Activated T-helper 1 cell treated with anti-CD3 and anti-CD28 coated beads, Interleukin-12 subunit alpha, Interleukin-12 subunit beta, Interleukin-2, Interleukin-4 antibody, amounts not matched to agents 30 ng/mL and 10 ng/mL and 1 ng/mL, durations not matched to agents 14 hours and 24 hours and 36 hours (primary cell): ENCODE measurements at regions of chr5 and their contacts with region 1.

Region 1: GRCh38 chr5:113612060-113612496 is 98.6 kb downstream of the YTHDC2 start:
- DNase-seq: no peak
- H3K4me3 Mint-ChIP-seq: no peak overlapping the region
- H3K27ac Mint-ChIP-seq: no peak overlapping the region
- H3K4me1 Mint-ChIP-seq: peaks cover 5% of the 10 kb centered on the region
- H3K27me3 Mint-ChIP-seq: peaks cover 6% of the 10 kb centered on the region

Region 2: DNA sequence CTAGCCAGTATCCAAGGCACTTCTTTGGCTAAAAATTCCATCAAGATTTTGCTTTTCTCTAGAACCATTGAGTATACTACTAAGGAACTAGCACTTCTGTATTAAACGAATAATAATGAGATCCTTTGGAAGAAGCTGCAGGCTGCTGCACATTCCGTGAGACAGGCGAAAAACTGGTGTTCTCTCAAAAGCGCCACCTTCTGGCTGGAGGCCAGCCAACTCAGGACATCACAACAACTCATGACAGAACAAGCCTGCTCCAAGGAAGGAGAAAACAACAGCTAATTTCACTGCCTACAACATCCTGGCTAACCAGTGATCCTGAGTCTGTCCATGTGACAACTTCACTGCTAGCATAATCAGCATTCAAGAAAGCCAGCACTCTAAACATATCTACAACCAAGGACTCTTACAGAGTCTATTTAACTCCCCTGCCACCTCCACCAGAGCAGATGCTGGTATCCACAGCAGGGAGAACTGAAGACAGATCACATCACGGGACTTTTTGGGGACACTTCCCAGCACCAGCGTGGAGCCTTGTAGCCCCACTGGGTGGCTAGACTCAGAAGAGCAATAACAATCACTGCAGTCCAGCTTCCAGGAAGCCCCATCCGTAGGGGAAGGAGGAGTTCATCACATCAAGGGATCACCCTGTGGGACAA is 51.9 kb after region 1 on chr5:
- intact Hi-C with region 1: loop called (anchors 1 kb)
- DNase-seq: no peak
- H3K4me3 Mint-ChIP-seq: no peak overlapping the region
- H3K27ac Mint-ChIP-seq: no peak overlapping the region
- H3K4me1 Mint-ChIP-seq: no peaks in the 10 kb centered on the region
- H3K27me3 Mint-ChIP-seq: peaks cover 11% of the 10 kb centered on the region

Region 3: DNA sequence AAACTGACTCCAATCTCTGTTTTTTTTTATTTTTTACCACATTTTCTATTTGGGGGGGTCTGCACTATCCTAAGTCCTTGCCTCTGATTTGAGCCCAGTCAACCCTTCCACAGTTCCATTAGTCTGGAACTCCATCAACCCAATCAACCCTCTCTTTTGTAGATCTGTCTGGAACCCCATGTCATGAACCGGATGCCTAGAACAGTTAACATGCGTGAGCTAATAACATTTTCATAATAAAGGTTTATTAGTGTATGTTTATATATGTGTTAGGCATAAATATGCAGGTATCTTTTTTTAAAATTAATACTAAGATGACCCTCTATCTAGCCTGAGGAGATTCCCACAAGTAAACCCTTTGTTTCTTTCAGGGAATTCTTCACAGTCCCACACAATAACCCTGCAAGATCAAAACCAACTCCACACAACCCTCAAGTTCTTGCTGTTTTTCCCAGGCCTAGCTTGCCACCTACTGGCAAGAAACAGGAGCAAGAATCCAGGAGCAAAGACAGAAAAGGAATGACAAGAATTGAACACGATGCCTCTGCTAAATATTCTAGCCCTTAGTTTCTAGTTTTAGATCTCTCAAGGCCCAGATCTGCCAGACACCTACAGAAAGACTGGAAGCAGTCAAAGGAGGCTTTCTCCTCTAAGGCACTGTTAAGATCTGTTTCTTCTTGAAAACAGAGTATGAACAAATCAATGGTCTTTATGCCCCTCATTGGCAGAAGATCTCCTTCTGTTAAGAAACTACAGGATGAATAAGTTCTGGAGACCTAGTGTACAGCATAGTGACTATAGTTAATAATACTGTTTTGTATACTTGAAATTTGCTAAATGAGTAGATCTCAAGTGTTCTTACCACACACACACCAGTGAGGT is 1457.2 kb after region 1 on chr5:
- intact Hi-C with region 1: loop called (anchors 2 kb)
- DNase-seq: no peak
- H3K4me3 Mint-ChIP-seq: no peak overlapping the region
- H3K27ac Mint-ChIP-seq: no peak overlapping the region
- H3K4me1 Mint-ChIP-seq: peaks cover 15% of the 10 kb centered on the region
- H3K27me3 Mint-ChIP-seq: peaks cover 16% of the 10 kb centered on the region

Region 4: GRCh38 chr5:115246361-115246991 is 1634.4 kb after region 1 on chr5:
- intact Hi-C with region 1: loop called (anchors 5 kb)
- DNase-seq: no peak
- H3K4me3 Mint-ChIP-seq: no peak overlapping the region
- H3K27ac Mint-ChIP-seq: no peak overlapping the region
- H3K4me1 Mint-ChIP-seq: peaks cover 14% of the 10 kb centered on the region
- H3K27me3 Mint-ChIP-seq: no peaks in the 10 kb centered on the region

Region 5: GRCh38 chr5:115579747-115580173 is 1967.7 kb after region 1 on chr5:
- intact Hi-C with region 1: loop called (anchors 10 kb)
- DNase-seq: no peak
- H3K4me3 Mint-ChIP-seq: no peak overlapping the region
- H3K27ac Mint-ChIP-seq: no peak overlapping the region
- H3K4me1 Mint-ChIP-seq: no peaks in the 10 kb centered on the region
- H3K27me3 Mint-ChIP-seq: no peaks in the 10 kb centered on the region